ENCODE measurements at regions of chrX and their contacts with region 1.

Region 1: DNA sequence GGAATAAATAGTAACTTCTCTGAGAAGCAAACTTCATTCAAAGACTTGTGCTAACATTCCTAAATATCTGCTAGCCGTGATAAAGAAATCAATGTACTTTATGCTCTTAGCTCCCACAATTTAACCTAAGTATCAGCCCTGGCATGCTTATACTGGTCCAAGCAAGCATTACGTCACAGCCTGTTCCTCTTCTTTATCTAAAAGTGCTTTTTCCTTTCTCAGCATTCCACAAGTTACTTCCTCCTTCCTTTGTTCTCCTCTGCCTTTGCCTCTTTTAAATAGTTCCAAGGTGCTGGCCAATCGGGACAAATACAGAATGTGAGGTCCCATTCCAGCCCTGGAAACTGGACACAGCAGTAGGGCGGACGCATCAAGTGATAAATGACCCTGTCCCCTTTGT is 249.6 kb downstream of the DHRSX start:
- DNase-seq: no peak
- ATAC-seq: no peak
- H3K4me3 ChIP-seq: no peak overlapping the region
- H3K27ac ChIP-seq: no peak overlapping the region
- H3K4me1 ChIP-seq: peaks cover 6% of the 10 kb centered on the region in 2 experiments; a peak in 3 of 5 replicates
- H3K27me3 ChIP-seq: no peaks in the 10 kb centered on the region
- CTCF ChIP-seq: no peak
- EP300 ChIP-seq: no peak
- POLR2A ChIP-seq: no peak
- RAD21 ChIP-seq: no peak

Region 2: GRCh38 chrX:2231570-2232192 is 19.5 kb before region 1 on chrX:
- CTCF ChIA-PET with region 1: no interaction called
- POLR2A ChIA-PET with region 1: no interaction called
- in situ Hi-C with region 1: no loop called
- intact Hi-C with region 1: loop called (anchors 2 kb)
- DNase-seq: no peak
- ATAC-seq: no peak
- H3K4me3 ChIP-seq: no peak overlapping the region
- H3K27ac ChIP-seq: no peak overlapping the region
- H3K4me1 ChIP-seq: no peaks in the 10 kb centered on the region; a peak in 3 of 5 replicates
- H3K27me3 ChIP-seq: no peaks in the 10 kb centered on the region
- CTCF ChIP-seq: no peak
- EP300 ChIP-seq: no peak
- POLR2A ChIP-seq: no peak
- RAD21 ChIP-seq: no peak